Sigmoid colon (tissue), 7 donors: ENCODE measurements at regions of chr14 and their contacts with region 1.

Region 1: DNA sequence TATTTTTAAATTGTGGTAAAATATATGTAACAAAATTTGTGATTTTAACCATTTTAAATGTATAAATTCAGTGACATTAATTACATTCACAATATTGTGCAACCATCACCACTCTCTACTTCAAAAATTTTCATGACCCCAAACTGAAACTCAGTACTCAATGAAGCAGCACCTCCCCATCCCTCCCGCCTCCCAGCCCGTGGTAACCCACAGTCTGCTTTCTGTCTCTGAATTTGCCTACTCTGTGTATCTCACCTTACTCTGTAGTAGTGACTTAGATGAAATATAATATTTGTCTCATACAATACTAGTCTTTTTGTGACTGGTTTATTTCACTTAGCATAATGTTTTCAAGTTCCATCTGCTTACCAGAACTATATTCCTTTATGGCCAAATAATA is 36.2 kb downstream of the EML1 start:
- DNase-seq: no peak
- H3K4me3 ChIP-seq: no peak overlapping the region
- H3K27ac ChIP-seq: no peak overlapping the region
- H3K4me1 ChIP-seq: peaks cover 0 to 8% (median 0%) of the 10 kb centered on the region in 4 donors
- H3K27me3 ChIP-seq: no peaks in the 10 kb centered on the region
- CTCF ChIP-seq: no peak
- EP300 ChIP-seq: no peak
- POLR2A ChIP-seq: no peak

Region 2: GRCh38 chr14:99628832-99629618 is 200.4 kb before region 1 on chr14:
- intact Hi-C with region 1: no loop called
- DNase-seq: peak; percentile 90
- H3K4me3 ChIP-seq: no peak overlapping the region
- H3K27ac ChIP-seq: no peak overlapping the region
- H3K4me1 ChIP-seq: peaks cover 4 to 18% (median 10%) of the 10 kb centered on the region in 4 donors
- H3K27me3 ChIP-seq: no peaks in the 10 kb centered on the region
- CTCF ChIP-seq: peak; percentile 91 to 98 (median 96)
- EP300 ChIP-seq: no peak
- POLR2A ChIP-seq: no peak

Region 3: GRCh38 chr14:99862136-99862535 is 32.7 kb after region 1 on chr14:
- intact Hi-C with region 1: loop called (anchors 5 kb)
- DNase-seq: no peak
- H3K4me3 ChIP-seq: no peak overlapping the region
- H3K27ac ChIP-seq: no peak overlapping the region
- H3K4me1 ChIP-seq: peaks cover 0 to 10% (median 5%) of the 10 kb centered on the region in 4 donors
- H3K27me3 ChIP-seq: no peaks in the 10 kb centered on the region
- CTCF ChIP-seq: no peak
- EP300 ChIP-seq: no peak
- POLR2A ChIP-seq: no peak